HCT116 (cell line): ENCODE measurements at regions of chr11 and their contacts with region 1.

Region 1: GRCh38 chr11:1889224-1890120 is 2.2 kb downstream of the PRR33 start:
- DNase-seq: no peak
- ATAC-seq: no peak
- H3K4me3 ChIP-seq: no peak overlapping the region
- H3K27ac ChIP-seq: no peak overlapping the region
- H3K4me1 ChIP-seq: no peaks in the 10 kb centered on the region
- H3K27me3 ChIP-seq: peaks cover 8% of the 10 kb centered on the region; the same call in 1 of the 2 replicates
- CTCF ChIP-seq: no peak
- POLR2A ChIP-seq: no peak
- RAD21 ChIP-seq: no peak

Region 2: GRCh38 chr11:1628506-1629325 is 260.8 kb before region 1 on chr11:
- CTCF ChIA-PET with region 1: no interaction called
- POLR2A ChIA-PET with region 1: no interaction called
- RAD21 ChIA-PET with region 1: no interaction called
- intact Hi-C with region 1: no loop called
- DNase-seq: no peak
- ATAC-seq: peak; percentile 99
- H3K4me3 ChIP-seq: no peak overlapping the region
- H3K27ac ChIP-seq: no peak overlapping the region
- H3K4me1 ChIP-seq: peaks cover 0 to 6% of the 10 kb centered on the region in 2 experiments; a peak in 1 of 4 replicates
- H3K27me3 ChIP-seq: peaks cover 3% of the 10 kb centered on the region; the same call in 1 of the 2 replicates
- CTCF ChIP-seq: peak; percentile 79 to 98 (median 97)
- POLR2A ChIP-seq: no peak
- RAD21 ChIP-seq: peak; percentile 73

Region 3: DNA sequence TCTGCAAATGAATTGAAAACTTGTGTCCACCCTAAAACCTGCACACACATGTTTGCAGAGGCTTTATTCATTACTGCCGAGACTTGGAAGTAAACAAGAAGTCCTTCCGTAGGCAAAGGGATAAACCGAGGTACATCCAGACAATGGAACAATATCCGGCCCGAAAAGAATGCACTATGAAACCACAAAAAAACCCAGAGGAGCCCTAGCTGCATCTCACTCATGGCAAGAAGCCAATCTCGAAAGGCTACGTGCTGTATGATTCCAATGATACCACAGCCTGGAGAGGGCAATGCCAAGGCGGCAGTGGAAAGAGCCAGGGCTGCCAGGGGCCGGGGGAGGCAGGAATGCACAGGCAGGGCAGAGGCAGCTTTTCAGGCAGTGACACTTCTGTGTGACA is 54.5 kb after region 1 on chr11:
- CTCF ChIA-PET with region 1: no interaction called
- POLR2A ChIA-PET with region 1: no interaction called
- RAD21 ChIA-PET with region 1: no interaction called
- intact Hi-C with region 1: loop called (anchors 10 kb)
- DNase-seq: no peak
- ATAC-seq: no peak
- H3K4me3 ChIP-seq: no peak overlapping the region
- H3K27ac ChIP-seq: no peak overlapping the region
- H3K4me1 ChIP-seq: peaks cover 0 to 9% of the 10 kb centered on the region in 2 experiments; a peak in 1 of 4 replicates
- H3K27me3 ChIP-seq: no peaks in the 10 kb centered on the region
- CTCF ChIP-seq: no peak
- POLR2A ChIP-seq: no peak
- RAD21 ChIP-seq: no peak